Mucosa of descending colon (tissue), 3 donors: ENCODE measurements at regions of chr1 and their contacts with region 1.

Region 1: DNA sequence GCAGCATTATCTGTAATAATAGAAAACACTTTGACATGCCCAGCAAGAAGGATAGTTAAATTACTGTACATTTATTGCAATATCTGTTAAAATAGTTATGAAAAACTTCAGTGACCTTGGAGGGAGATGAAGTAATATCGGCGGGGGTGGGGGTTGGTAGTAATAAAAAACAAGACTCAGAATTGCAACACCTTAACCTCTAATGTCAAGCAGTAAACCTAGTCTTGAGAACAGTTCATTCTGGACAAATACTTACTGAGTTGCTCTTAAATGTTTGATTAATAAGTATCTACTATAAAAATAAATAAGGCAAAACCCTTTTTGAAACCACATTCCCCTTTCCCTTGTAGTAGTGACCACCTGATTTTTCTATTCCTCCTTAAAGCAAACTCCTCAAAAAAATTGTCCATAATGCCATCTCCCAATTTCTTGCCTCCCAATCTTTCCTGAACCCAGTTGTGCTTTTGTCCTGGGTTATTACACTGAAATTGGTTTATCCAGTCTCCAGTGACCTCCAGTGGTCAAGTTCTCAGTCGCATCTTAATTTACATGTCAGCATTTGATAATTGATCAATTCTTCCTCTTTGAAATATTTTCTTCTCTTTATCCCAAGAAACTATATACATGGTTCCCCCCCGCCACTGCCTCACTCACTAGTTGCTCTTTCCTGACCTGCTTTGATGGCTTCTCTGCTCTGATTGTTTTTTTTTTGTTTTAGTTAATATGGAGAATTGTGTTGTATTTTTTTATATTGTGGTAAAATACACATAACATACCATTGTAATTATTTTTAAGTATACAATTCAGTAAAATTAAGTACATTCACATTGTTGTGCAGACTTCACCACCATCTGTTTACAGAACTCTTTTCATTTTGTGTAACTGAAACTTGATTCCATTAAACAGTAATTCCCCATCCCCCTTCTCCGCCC is 36.8 kb downstream of the RAP1A start:
- DNase-seq: peak in 1 of 3 donors; percentile 72
- ATAC-seq: peak; percentile 45
- H3K4me3 ChIP-seq: no peak overlapping the region
- H3K4me1 ChIP-seq: peaks cover 40% of the 10 kb centered on the region
- CTCF ChIP-seq: no peak

Region 2: GRCh38 chr1:111516005-111516535 is 140.3 kb before region 1 on chr1:
- intact Hi-C with region 1: loop called in 1 of 2 experiments (anchors 10 kb)
- DNase-seq: no peak
- ATAC-seq: peak; percentile 62
- H3K4me3 ChIP-seq: no peak overlapping the region
- H3K4me1 ChIP-seq: peaks cover 5% of the 10 kb centered on the region
- CTCF ChIP-seq: no peak